Calu3 (cell line): ENCODE measurements at regions of chr19 and their contacts with region 1.

Region 1: GRCh38 chr19:52853880-52854279 is 3.5 kb downstream of the ZNF468 start:
- DNase-seq: no peak
- H3K4me3 Mint-ChIP-seq: no peak overlapping the region
- H3K27ac Mint-ChIP-seq: no peak overlapping the region
- H3K4me1 Mint-ChIP-seq: peaks cover 10% of the 10 kb centered on the region
- H3K27me3 Mint-ChIP-seq: no peaks in the 10 kb centered on the region
- CTCF ChIP-seq: no peak

Region 2: DNA sequence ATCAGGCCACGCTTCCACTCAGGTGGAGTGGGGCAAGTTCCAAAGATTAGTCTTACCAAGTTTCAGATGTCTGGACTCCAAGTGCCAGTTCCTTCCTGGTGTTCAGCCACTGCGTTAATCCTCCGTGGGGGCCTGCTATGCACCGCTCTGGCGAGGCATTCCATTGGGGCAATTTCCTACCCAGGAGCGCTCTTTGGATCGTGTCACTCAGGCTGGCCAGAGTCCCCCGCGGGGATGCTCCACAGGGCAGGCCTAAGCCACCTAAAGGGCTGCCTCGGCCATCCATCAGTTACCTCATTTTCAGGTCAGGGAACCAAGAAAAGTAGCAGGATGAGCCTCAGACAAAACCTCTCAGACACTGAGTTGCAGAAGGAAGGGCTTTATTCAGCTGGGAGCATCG is 50.2 kb after region 1 on chr19:
- CTCF ChIA-PET with region 1: no interaction called
- intact Hi-C with region 1: loop called (anchors 10 kb)
- DNase-seq: no peak
- H3K4me3 Mint-ChIP-seq: no peak overlapping the region
- H3K27ac Mint-ChIP-seq: no peak overlapping the region
- H3K4me1 Mint-ChIP-seq: no peaks in the 10 kb centered on the region
- H3K27me3 Mint-ChIP-seq: no peaks in the 10 kb centered on the region
- CTCF ChIP-seq: no peak